Thyroid gland (tissue), 4 donors: ENCODE measurements at regions of chr1 and their contacts with region 1.

Region 1: DNA sequence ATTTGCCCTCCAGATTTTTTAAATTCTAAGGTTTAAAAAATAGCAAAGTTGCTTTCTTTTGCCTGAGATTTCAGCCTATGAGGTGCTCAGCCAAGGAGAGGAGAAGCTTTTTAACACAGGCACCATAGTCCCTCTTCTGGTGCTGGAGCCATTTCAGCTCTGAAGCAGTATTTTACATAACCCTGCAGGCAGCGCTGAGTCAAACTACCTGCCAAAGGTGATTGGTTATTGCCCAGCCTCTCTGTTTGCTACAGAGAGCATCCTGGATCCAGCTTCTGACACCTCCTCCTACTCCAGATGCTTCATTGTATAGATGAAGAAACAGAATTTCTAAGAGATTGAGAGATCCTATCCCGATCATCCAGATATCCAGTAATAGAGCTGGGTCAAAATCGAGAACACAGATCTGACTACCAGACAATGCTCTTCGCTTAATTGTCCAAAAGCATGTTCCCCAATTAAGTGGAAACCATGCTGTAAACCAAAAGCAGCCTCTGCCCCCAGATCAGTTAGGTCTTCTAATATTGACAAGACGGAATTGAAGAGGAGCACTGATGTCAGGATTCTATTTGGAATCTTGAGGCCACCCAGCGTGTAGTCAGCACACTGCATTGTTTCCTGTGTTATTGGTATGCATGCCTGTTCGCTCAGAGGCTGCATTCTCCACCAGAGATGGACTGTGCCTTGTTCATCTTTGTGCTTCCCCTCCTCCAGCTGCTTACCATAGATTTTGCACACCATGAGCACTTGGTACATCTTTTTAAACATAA is 22.1 kb downstream of the RGS8 start:
- DNase-seq: no peak
- H3K4me3 ChIP-seq: no peak overlapping the region
- H3K27ac ChIP-seq: no peak overlapping the region
- H3K4me1 ChIP-seq: peaks cover 0 to 18% of the 10 kb centered on the region in 2 donors
- H3K27me3 ChIP-seq: no peaks in the 10 kb centered on the region
- CTCF ChIP-seq: no peak
- POLR2A ChIP-seq: no peak

Region 2: GRCh38 chr1:182614796-182615454 is 47.4 kb before region 1 on chr1:
- intact Hi-C with region 1: loop called (anchors 10 kb)
- DNase-seq: peak; percentile 93 to 95
- H3K4me3 ChIP-seq: peak overlapping the region in 2 of 3 donors; percentile 3 to 31
- H3K27ac ChIP-seq: peak overlapping the region; percentile 83 to 95 (median 92)
- H3K4me1 ChIP-seq: peaks cover 38 to 48% of the 10 kb centered on the region in 2 donors
- H3K27me3 ChIP-seq: no peaks in the 10 kb centered on the region
- CTCF ChIP-seq: no peak
- POLR2A ChIP-seq: peak; percentile 2 to 80

Region 3: GRCh38 chr1:182795563-182796228 is 133.4 kb after region 1 on chr1:
- intact Hi-C with region 1: no loop called
- DNase-seq: no peak
- H3K4me3 ChIP-seq: no peak overlapping the region
- H3K27ac ChIP-seq: no peak overlapping the region
- H3K4me1 ChIP-seq: no peaks in the 10 kb centered on the region
- H3K27me3 ChIP-seq: no peaks in the 10 kb centered on the region
- CTCF ChIP-seq: no peak
- POLR2A ChIP-seq: no peak